ENCODE measurements at regions of chr5 and their contacts with region 1.

Region 1: DNA sequence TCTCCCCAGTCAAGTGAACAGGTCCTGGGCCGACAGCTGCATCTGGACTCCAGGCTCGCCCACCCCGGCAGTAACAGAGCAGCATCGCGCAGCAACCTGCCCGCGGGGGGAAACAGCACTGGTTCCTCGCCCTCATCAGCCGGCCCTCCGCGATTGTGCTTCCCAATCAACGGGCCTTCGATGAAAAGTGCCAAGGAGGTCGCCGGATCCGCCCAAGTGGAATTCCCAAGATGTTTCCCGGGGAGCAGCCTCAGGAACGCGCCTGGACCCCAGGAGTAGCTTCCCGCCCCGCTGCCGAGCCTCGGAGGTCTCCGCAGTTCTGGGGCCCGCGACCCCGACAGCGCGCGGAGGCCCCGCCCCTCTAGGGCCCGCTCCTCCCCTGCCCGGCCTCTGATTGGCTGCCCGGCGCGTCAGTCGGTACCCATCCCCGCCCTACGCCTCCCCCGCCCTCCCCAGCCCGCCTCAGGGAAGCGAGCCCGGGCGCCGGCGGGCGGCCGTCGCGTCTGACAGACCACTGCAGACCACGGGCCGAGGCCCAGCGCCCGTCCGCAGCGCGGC is at the start of gene OTULINL:
- DNase-seq: peak; percentile 67 to 90 (median 84)
- ATAC-seq: peak; percentile 87 to 91 (median 89)
- H3K4me3 ChIP-seq: peak within 1 kb of the TSS; percentile 77 to 83
- H3K4me3 Mint-ChIP-seq: peak within 1 kb of the TSS; percentile 77 to 85 (median 85)
- H3K27ac ChIP-seq: peak within 1 kb of the TSS; percentile 68
- H3K27ac Mint-ChIP-seq: peak within 1 kb of the TSS; percentile 89 to 90
- H3K4me1 ChIP-seq: peaks cover 14 to 31% of the 10 kb centered on the region in 2 experiments
- H3K4me1 Mint-ChIP-seq: peaks cover 42 to 46% (median 45%) of the 10 kb centered on the region in 3 donors
- H3K27me3 ChIP-seq: peaks cover 0 to 7% of the 10 kb centered on the region in 2 experiments
- H3K27me3 Mint-ChIP-seq: no peaks in the 10 kb centered on the region
- total RNA-seq, gene OTULINL: 30.0 to 50.1 (median 32.6) TPM

Region 2: DNA sequence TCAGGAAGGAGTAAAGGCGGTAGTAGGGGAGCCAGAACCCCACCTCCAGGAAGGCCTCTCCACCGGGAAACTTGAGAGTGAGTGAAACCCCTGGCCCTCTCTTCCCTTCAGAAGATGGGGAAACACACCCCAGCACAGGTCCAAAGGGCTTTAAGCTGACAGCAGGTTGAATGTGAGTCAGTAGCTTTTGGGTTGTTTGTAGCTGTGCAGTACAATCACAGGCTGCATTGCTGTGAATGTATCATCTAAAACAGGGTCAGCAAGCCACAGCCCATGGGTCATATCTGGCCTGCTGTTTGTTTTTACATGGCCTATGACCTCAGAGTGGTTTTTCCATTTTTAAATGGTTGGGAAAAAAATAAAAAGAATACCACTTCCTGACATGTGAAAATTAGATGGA is 10.1 kb after region 1 on chr5:
- CTCF ChIA-PET with region 1: interaction called, 3 to 6 read pairs
- POLR2A ChIA-PET with region 1: interaction called in 1 of 2 experiments, 15 read pairs
- DNase-seq: no peak
- ATAC-seq: no peak
- H3K4me3 ChIP-seq: no peak overlapping the region
- H3K4me3 Mint-ChIP-seq: no peak overlapping the region
- H3K27ac ChIP-seq: no peak overlapping the region
- H3K27ac Mint-ChIP-seq: peak overlapping the region; percentile 85 to 98
- H3K4me1 ChIP-seq: peaks cover 29 to 62% of the 10 kb centered on the region in 2 experiments
- H3K4me1 Mint-ChIP-seq: peaks cover 90 to 94% (median 92%) of the 10 kb centered on the region in 3 donors
- H3K27me3 ChIP-seq: no peaks in the 10 kb centered on the region
- H3K27me3 Mint-ChIP-seq: no peaks in the 10 kb centered on the region